Esophagus muscularis mucosa (tissue), 4 donors: ENCODE measurements at regions of chr1 and their contacts with region 1.

Region 1: GRCh38 chr1:114757455-114758250 is at the start of gene CSDE1:
- DNase-seq: peak; percentile 98
- H3K4me3 ChIP-seq: peak within 1 kb of the TSS; percentile 75 to 96 (median 91)
- H3K27ac ChIP-seq: peak within 1 kb of the TSS; percentile 97 to 99 (median 99)
- H3K4me1 ChIP-seq: peaks cover 43 to 50% (median 49%) of the 10 kb centered on the region in 4 donors
- H3K27me3 ChIP-seq: no peaks in the 10 kb centered on the region
- CTCF ChIP-seq: peak in 2 of 3 experiments; percentile 42 to 47
- EP300 ChIP-seq: no peak
- POLR2A ChIP-seq: peak; percentile 64
- total RNA-seq, gene CSDE1: 614 to 1,394 (median 877) TPM

Region 2: DNA sequence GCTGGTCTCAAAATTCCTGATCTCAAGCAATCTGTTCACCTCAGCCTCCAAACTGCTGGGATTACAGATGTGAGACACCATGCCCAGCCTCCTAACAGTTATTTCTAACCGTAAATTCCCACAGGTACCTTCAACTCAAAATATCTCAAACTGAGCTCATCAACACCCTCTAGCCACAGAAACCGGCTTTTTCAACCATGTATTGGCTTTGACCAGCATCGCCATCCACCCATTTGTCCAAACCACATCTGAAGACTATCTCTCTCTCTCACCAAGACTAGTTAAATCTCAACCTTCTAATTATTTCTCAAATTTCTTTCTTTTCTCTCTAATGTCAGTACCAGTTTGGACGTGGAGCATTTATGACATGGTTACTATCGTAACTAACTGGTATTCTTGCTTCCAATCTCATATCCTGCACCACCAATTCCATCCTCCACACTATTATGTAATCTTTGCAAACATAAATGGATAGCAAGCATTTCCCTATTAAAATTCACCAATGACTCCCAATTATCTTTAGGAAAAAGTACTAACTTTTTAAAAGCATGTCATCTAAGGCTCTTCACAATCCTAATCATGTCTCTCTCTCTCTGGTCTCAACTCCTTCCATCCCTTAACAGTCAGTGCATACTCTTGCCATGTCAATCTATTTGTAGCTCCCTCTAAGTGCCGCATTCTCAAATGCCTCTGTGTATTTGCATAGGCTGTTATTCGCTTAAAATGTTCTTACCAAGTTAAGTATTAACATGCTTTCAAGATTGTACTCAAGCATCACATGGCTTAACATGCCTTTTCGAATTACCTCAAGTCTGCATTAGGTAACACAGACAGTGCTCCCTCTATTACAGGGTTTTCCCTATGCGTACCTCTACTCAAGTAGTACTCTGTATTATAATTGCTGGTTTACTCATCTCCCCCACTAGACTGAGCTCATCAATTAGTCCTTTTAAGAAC is 963.5 kb before region 1 on chr1:
- intact Hi-C with region 1: no loop called
- DNase-seq: no peak
- H3K4me3 ChIP-seq: no peak overlapping the region
- H3K27ac ChIP-seq: no peak overlapping the region
- H3K4me1 ChIP-seq: peaks cover 19 to 38% (median 22%) of the 10 kb centered on the region in 4 donors
- H3K27me3 ChIP-seq: no peaks in the 10 kb centered on the region
- CTCF ChIP-seq: no peak
- EP300 ChIP-seq: no peak
- POLR2A ChIP-seq: no peak

Region 3: DNA sequence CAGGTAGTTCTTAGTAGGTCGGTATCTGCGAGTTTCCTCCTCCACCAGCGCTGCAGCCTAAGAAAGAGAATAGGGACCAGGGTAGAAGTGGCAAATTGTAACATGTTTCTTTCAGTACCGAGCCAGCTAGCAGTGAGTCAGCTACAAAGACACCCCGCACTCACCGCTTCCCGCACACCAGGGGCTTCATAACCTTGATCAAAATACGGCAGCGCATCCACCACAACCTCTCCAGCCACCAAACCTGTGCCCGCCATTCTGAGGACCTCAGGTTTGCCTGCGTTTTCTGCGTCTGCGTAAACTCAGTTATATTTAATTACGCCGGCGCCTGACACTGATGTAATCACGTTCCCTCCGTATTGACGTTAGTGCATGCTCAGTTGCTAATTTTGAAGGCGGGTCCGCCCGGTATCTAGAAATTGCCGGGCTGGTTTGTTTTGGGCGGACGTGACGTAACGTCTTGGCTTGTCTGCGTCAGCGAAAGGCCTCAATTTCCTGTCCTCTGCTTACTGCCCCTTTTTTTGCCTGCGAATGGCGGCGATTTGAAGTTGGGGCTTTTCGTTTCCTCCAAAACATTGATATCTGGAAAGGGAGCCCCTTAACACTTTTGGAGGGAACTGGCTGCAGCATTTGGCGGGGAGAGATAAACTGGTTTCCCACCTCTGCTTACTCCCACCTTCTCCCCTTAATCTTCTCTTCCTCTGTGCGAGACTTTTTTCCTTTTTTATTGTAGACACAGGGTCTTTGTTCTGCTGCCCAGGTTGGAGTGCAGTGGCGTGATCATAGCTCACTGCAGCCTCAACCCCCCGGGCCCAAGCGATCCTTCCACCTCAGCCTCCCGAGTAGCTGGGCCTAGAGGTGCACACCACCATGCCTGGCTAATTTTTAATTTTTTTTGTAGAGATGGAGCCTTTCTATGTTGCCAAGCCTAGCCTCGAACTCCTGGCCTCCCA is 176.0 kb before region 1 on chr1 and contains the start of gene BCAS2:
- intact Hi-C with region 1: loop called (anchors 5 kb)
- DNase-seq: peak; percentile 99
- H3K4me3 ChIP-seq: peak within 1 kb of the TSS; percentile 65 to 80 (median 68)
- H3K27ac ChIP-seq: peak within 1 kb of the TSS; percentile 88 to 93 (median 90)
- H3K4me1 ChIP-seq: peaks cover 31 to 42% (median 37%) of the 10 kb centered on the region in 4 donors
- H3K27me3 ChIP-seq: no peaks in the 10 kb centered on the region
- CTCF ChIP-seq: no peak
- EP300 ChIP-seq: peak; percentile 68
- POLR2A ChIP-seq: peak; percentile 62
- total RNA-seq, gene BCAS2: 25.9 to 44.0 (median 34.1) TPM

Region 4: GRCh38 chr1:114892194-114892918 is 134.7 kb after region 1 on chr1:
- intact Hi-C with region 1: no loop called
- DNase-seq: no peak
- H3K4me3 ChIP-seq: no peak overlapping the region
- H3K27ac ChIP-seq: no peak overlapping the region
- H3K4me1 ChIP-seq: no peaks in the 10 kb centered on the region
- H3K27me3 ChIP-seq: peaks cover 0 to 3% (median 0%) of the 10 kb centered on the region in 4 donors
- CTCF ChIP-seq: no peak
- EP300 ChIP-seq: no peak
- POLR2A ChIP-seq: no peak